Naive thymus-derived CD4-positive, alpha-beta T cell (primary cell): ENCODE measurements at regions of chr1 and their contacts with region 1.

Region 1: DNA sequence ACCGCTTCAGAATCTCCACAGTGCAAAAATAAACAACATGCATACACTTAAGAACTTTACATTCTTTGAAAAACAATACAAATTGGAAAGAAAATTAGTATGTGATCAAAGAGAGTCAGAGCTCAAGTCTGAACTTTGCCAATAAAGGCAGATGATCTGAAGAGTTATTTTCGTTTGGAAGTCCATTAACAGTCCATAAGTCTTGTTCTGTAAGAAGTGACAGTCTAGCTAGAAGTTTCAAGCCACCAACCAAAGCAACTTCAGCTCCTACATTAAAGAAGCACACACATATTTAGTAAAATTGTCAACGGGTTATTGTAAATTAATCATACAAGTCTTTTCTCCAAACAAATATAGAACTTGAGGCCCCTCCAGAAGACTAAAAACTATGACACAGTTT is 20.7 kb downstream of the ANGEL2 start:
- DNase-seq: no peak
- ATAC-seq: no peak
- H3K4me3 ChIP-seq: no peak overlapping the region
- H3K4me3 Mint-ChIP-seq: no peak overlapping the region
- H3K27ac ChIP-seq: no peak overlapping the region
- H3K27ac Mint-ChIP-seq: no peak overlapping the region
- H3K4me1 ChIP-seq: no peaks in the 10 kb centered on the region
- H3K4me1 Mint-ChIP-seq: peaks cover 0 to 12% (median 7%) of the 10 kb centered on the region in 7 donors
- H3K27me3 ChIP-seq: no peaks in the 10 kb centered on the region
- H3K27me3 Mint-ChIP-seq: no peaks in the 10 kb centered on the region

Region 2: DNA sequence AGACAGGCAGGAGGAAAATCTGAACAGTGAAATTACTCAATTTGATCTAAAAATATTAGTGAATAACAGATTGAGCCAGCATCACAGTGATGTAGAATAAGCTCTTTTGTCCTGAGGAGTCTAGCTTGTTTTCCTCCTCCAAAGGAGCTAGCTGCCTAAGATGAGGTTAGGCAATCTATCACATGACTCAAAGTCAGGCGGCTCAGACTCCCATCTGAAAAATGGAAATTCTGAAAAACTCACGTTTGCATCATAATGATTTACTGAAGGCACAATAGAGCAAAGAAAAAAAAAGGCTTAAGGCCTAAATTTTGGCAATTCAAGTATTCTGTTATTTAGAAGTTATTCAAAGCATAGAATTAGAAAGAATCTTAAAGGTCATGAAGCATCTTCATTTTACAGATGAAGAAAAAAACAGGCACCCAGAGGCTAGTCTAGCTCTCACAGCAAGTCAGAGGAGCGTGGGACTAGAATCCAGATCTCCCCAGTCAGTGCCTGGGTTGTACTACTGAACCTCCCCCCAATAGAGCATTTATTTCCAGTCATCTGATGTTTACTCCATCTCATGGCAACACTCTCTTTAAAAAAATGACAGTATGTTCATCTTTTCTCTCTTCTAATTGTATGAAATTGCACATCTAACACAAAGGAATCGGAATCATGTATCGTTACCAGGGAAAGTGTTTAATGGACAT is 448.8 kb before region 1 on chr1:
- CTCF ChIA-PET with region 1: no interaction called
- POLR2A ChIA-PET with region 1: no interaction called
- intact Hi-C with region 1: no loop called
- DNase-seq: no peak
- ATAC-seq: peak; percentile 50
- H3K4me3 ChIP-seq: no peak overlapping the region
- H3K4me3 Mint-ChIP-seq: no peak overlapping the region
- H3K27ac ChIP-seq: no peak overlapping the region
- H3K27ac Mint-ChIP-seq: no peak overlapping the region
- H3K4me1 ChIP-seq: no peaks in the 10 kb centered on the region
- H3K4me1 Mint-ChIP-seq: peaks cover 0 to 2% (median 0%) of the 10 kb centered on the region in 7 donors
- H3K27me3 ChIP-seq: no peaks in the 10 kb centered on the region
- H3K27me3 Mint-ChIP-seq: peaks cover 7 to 55% (median 18%) of the 10 kb centered on the region in 5 donors

Region 3: GRCh38 chr1:212814537-212815334 is 180.2 kb before region 1 on chr1:
- CTCF ChIA-PET with region 1: interaction called, 3 read pairs
- POLR2A ChIA-PET with region 1: no interaction called
- intact Hi-C with region 1: loop called (anchors 1 to 2 kb)
- DNase-seq: peak in 2 of 9 donors; percentile 1 to 4
- ATAC-seq: no peak
- H3K4me3 ChIP-seq: no peak overlapping the region
- H3K4me3 Mint-ChIP-seq: no peak overlapping the region
- H3K27ac ChIP-seq: no peak overlapping the region
- H3K27ac Mint-ChIP-seq: no peak overlapping the region
- H3K4me1 ChIP-seq: no peaks in the 10 kb centered on the region
- H3K4me1 Mint-ChIP-seq: peaks cover 0 to 4% (median 3%) of the 10 kb centered on the region in 7 donors
- H3K27me3 ChIP-seq: no peaks in the 10 kb centered on the region
- H3K27me3 Mint-ChIP-seq: no peaks in the 10 kb centered on the region

Region 4: GRCh38 chr1:213572912-213573647 is 578.2 kb after region 1 on chr1:
- CTCF ChIA-PET with region 1: no interaction called
- POLR2A ChIA-PET with region 1: no interaction called
- intact Hi-C with region 1: no loop called
- DNase-seq: no peak
- ATAC-seq: no peak
- H3K4me3 ChIP-seq: no peak overlapping the region
- H3K4me3 Mint-ChIP-seq: no peak overlapping the region
- H3K27ac ChIP-seq: no peak overlapping the region
- H3K27ac Mint-ChIP-seq: no peak overlapping the region
- H3K4me1 ChIP-seq: no peaks in the 10 kb centered on the region
- H3K4me1 Mint-ChIP-seq: no peaks in the 10 kb centered on the region
- H3K27me3 ChIP-seq: no peaks in the 10 kb centered on the region
- H3K27me3 Mint-ChIP-seq: peaks cover 0 to 28% (median 5%) of the 10 kb centered on the region in 5 donors